Activated CD8-positive, alpha-beta T cell treated with anti-CD3 and anti-CD28 coated beads for 36 hours (primary cell): ENCODE measurements at regions of chr3 and their contacts with region 1.

Region 1: DNA sequence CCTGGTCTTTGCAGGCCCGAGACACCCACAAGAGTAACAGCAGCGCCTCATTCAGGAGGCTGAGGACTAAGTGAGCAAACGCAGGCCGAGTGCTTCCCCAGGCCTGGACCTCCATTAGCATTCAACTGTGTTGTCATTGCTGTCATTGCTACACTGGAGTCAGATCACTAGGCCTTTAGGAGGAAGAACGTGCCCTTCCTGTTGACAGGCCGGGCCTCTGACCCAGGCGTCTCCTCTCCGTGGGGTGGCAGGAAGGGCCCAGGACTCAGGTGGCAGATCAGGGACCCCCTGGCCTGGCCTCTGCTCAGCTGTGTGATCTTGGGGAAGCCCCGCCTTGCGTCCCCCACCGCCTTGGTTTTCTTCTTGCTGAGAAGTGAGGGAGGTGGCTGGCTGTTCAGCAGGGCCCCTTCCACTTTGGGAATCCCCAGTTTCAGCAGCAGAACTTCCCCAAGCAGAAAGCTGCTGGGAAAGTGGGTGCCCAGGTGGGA is 19.1 kb downstream of the ZDHHC19 start:
- DNase-seq: peak; percentile 81
- ATAC-seq: peak; percentile 60
- H3K4me3 Mint-ChIP-seq: peak overlapping the region; percentile 28
- H3K27ac Mint-ChIP-seq: peak overlapping the region; percentile 85
- H3K4me1 Mint-ChIP-seq: peaks cover 41% of the 10 kb centered on the region
- H3K27me3 Mint-ChIP-seq: no peaks in the 10 kb centered on the region
- CTCF ChIP-seq: no peak

Region 2: DNA sequence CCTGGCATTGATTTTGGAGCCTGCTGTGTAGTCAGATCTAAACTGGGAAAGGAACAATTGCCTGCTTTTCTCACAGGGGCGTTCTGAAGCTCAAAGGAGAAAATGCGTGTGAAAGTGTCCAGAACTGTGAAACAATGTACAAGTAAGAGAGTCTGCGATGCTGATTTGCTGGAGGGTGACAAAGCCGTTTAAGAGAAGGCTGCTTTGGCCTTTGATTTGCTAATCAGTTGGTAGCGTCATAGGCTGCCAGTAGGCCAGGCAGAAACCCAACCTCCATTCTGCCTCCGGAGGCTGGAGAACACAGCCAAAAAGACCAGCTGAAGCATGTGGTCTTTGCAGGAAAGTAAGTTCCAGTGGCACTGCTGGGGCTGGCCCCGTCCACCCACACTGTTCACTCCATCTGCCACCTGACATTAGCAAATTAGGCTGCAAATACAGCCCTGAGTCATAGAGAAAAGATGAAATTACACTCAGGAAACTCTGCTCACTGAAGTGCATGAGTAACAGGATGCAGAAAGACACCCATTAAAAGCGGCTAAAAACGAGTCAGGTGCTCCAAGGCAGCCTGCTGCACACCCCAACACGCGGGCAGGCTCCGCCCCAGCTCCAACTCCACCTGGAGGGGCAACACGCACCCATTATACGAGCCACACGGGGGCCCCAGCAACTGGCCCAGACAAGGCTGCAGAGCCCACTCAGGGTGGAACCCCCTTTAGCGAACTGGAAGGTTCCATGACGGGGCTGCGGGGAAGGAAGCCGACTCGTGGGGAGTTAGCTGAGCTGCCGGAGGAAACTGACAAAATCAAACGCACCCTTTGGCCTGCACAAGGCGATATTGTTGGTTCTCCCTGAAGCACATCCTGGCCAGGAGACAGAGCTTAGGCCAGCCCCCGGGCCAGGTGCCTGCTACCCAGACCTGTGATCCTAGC is 12.4 kb before region 1 on chr3:
- CTCF ChIA-PET with region 1: interaction called, 13 read pairs
- POLR2A ChIA-PET with region 1: interaction called, 11 read pairs
- intact Hi-C with region 1: no loop called
- DNase-seq: peak; percentile 98
- ATAC-seq: peak; percentile 85
- H3K4me3 Mint-ChIP-seq: peak overlapping the region; percentile 61
- H3K27ac Mint-ChIP-seq: peak overlapping the region; percentile 100
- H3K4me1 Mint-ChIP-seq: peaks cover 52% of the 10 kb centered on the region
- H3K27me3 Mint-ChIP-seq: no peaks in the 10 kb centered on the region
- CTCF ChIP-seq: no peak